ENCODE measurements at regions of chr6 and their contacts with region 1.

Region 1: GRCh38 chr6:73732845-73733675 is 37.1 kb downstream of the CD109 start:
- DNase-seq: peak; percentile 78
- ATAC-seq: peak; percentile 92
- H3K4me3 Mint-ChIP-seq: no peak overlapping the region
- H3K27ac Mint-ChIP-seq: no peak overlapping the region
- H3K4me1 Mint-ChIP-seq: peaks cover 11% of the 10 kb centered on the region
- H3K27me3 Mint-ChIP-seq: no peaks in the 10 kb centered on the region
- CTCF ChIP-seq: peak; percentile 88

Region 2: GRCh38 chr6:73388800-73389512 is 344.1 kb before region 1 on chr6:
- CTCF ChIA-PET with region 1: no interaction called
- POLR2A ChIA-PET with region 1: no interaction called
- intact Hi-C with region 1: no loop called
- DNase-seq: peak; percentile 76
- ATAC-seq: peak; percentile 90
- H3K4me3 Mint-ChIP-seq: peak overlapping the region; percentile 75
- H3K27ac Mint-ChIP-seq: peak overlapping the region; percentile 57
- H3K4me1 Mint-ChIP-seq: peaks cover 14% of the 10 kb centered on the region
- H3K27me3 Mint-ChIP-seq: peaks cover 5% of the 10 kb centered on the region
- CTCF ChIP-seq: peak; percentile 51

Region 3: DNA sequence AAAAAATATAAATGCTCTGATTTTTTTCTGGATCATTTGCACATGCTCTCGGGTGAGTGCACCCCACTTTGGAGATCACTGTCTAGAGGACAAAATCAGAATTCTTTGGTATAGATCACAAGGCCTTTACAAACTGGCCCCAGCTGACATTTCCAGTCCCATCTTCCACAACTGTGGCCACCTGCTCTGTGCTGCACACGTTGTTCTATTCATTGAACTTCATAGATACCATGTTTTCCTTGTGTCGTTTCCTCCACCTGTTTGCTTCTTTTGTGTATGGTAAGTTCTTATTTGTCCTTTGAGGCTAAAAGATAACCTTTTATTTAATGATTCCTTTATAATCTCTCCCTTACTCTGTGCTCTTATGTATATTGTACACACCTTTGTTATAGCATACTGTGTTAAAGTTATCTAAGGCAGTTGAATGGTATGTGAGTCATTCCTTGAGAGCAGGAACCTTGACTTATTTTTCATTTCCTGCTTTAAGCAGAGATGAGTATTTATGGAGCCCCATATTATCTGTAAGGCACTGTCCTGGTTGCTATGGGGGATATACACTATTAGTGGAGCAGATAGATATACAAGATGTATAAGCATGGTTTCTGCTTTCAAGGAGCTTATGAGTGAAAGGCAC is 67.3 kb before region 1 on chr6:
- CTCF ChIA-PET with region 1: interaction called, 16 read pairs
- POLR2A ChIA-PET with region 1: no interaction called
- intact Hi-C with region 1: no loop called
- DNase-seq: no peak
- ATAC-seq: peak; percentile 85
- H3K4me3 Mint-ChIP-seq: no peak overlapping the region
- H3K27ac Mint-ChIP-seq: no peak overlapping the region
- H3K4me1 Mint-ChIP-seq: peaks cover 11% of the 10 kb centered on the region
- H3K27me3 Mint-ChIP-seq: peaks cover 19% of the 10 kb centered on the region
- CTCF ChIP-seq: no peak

Region 4: GRCh38 chr6:73688351-73688750 is 44.7 kb before region 1 on chr6:
- CTCF ChIA-PET with region 1: interaction called, 17 read pairs
- POLR2A ChIA-PET with region 1: no interaction called
- intact Hi-C with region 1: no loop called
- DNase-seq: no peak
- ATAC-seq: no peak
- H3K4me3 Mint-ChIP-seq: no peak overlapping the region
- H3K27ac Mint-ChIP-seq: no peak overlapping the region
- H3K4me1 Mint-ChIP-seq: peaks cover 7% of the 10 kb centered on the region
- H3K27me3 Mint-ChIP-seq: peaks cover 11% of the 10 kb centered on the region
- CTCF ChIP-seq: no peak

Region 5: GRCh38 chr6:73713410-73714147 is 19.5 kb before region 1 on chr6:
- CTCF ChIA-PET with region 1: interaction called, 22 read pairs
- POLR2A ChIA-PET with region 1: no interaction called
- intact Hi-C with region 1: no loop called
- DNase-seq: no peak
- ATAC-seq: peak; percentile 27
- H3K4me3 Mint-ChIP-seq: no peak overlapping the region
- H3K27ac Mint-ChIP-seq: no peak overlapping the region
- H3K4me1 Mint-ChIP-seq: peaks cover 13% of the 10 kb centered on the region
- H3K27me3 Mint-ChIP-seq: peaks cover 1% of the 10 kb centered on the region
- CTCF ChIP-seq: no peak

Region 6: DNA sequence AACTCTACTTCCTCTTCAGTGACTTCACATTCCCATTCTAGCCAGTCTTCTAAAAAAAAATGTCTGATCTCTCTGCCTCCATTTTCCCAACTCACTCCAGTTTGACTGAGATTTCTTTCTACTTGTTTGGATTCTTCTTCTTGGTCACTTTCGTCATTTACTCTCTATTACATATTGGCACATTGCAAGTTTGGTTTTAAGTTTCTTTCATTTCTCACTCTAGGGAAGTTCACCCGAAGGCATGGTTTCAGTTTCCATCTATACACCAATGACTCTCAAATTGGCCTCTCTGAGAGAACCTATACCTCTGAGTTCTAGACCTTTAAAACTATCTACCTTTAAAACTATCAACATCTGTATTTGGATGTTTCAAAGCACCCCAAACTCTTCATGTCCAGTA is 14.2 kb after region 1 on chr6:
- CTCF ChIA-PET with region 1: interaction called, 34 read pairs
- POLR2A ChIA-PET with region 1: no interaction called
- intact Hi-C with region 1: no loop called
- DNase-seq: no peak
- ATAC-seq: peak; percentile 90
- H3K4me3 Mint-ChIP-seq: no peak overlapping the region
- H3K27ac Mint-ChIP-seq: no peak overlapping the region
- H3K4me1 Mint-ChIP-seq: no peaks in the 10 kb centered on the region
- H3K27me3 Mint-ChIP-seq: no peaks in the 10 kb centered on the region
- CTCF ChIP-seq: no peak